GM13977 (cell line): ENCODE measurements at regions of chr12 and their contacts with region 1.

Region 1: GRCh38 chr12:94532490-94533422 is 73.1 kb upstream of the CEP83 start:
- DNase-seq: peak; percentile 78
- CTCF ChIP-seq: peak; percentile 92

Region 2: GRCh38 chr12:94139816-94140215 is 392.9 kb before region 1 on chr12:
- in situ Hi-C with region 1: loop called (anchors 5 kb)
- DNase-seq: no peak
- CTCF ChIP-seq: no peak

Region 3: GRCh38 chr12:94326727-94327126 is 206.0 kb before region 1 on chr12:
- in situ Hi-C with region 1: loop called (anchors 10 kb)
- DNase-seq: no peak
- CTCF ChIP-seq: no peak

Region 4: GRCh38 chr12:94401326-94401725 is 131.4 kb before region 1 on chr12:
- in situ Hi-C with region 1: no loop called
- DNase-seq: no peak
- CTCF ChIP-seq: no peak